ENCODE measurements at regions of chr1 and their contacts with region 1.

Region 1: GRCh38 chr1:160098852-160099561 is 588 bp upstream of the IGSF8 start:
- DNase-seq: peak; percentile 96
- H3K4me3 Mint-ChIP-seq: peak overlapping the region; percentile 81
- H3K27ac Mint-ChIP-seq: no peak overlapping the region
- H3K4me1 Mint-ChIP-seq: peaks cover 36% of the 10 kb centered on the region
- H3K27me3 Mint-ChIP-seq: no peaks in the 10 kb centered on the region
- CTCF ChIP-seq: no peak

Region 2: DNA sequence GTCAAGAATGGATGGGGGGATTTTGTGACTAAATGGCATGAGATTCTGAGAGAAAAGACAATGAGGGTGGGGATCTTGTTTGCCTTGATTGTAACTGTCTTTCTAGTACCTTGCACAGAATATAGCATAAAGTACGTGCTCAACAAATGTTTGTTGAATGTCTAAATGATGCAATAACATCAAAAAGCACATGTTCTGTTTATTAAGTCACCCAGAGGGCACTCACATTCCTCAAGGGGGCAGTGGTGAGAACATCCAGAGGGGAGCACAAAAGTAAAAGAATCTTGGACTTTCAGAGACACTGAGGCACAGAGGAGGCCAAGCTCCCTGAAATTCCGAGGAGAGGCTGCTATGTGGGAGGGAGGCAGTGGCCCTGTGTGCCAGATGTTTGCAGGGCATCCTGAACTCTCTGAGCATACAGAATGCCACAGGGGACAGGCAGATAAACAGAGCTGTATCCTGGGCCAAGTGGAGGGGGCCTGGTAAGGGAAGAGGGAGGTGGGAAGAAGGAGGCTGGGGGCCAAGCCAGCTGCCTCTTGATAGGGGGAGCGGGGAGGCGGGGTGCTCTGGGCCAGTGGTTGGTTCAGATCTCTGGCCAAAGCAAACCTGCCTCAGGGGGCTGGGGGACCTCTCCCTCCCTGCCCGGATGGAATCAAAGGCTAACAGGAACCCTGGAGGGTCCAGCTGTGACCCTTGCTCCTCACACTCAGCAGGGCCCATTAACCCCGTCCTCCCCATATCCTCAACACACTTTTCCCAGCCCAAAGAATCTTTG is 10.1 kb after region 1 on chr1:
- CTCF ChIA-PET with region 1: interaction called, 31 read pairs
- POLR2A ChIA-PET with region 1: interaction called, 4 read pairs
- intact Hi-C with region 1: no loop called
- DNase-seq: peak; percentile 88
- H3K4me3 Mint-ChIP-seq: no peak overlapping the region
- H3K27ac Mint-ChIP-seq: no peak overlapping the region
- H3K4me1 Mint-ChIP-seq: peaks cover 12% of the 10 kb centered on the region
- H3K27me3 Mint-ChIP-seq: no peaks in the 10 kb centered on the region
- CTCF ChIP-seq: peak; percentile 52

Region 3: GRCh38 chr1:160186246-160186645 is 87.2 kb after region 1 on chr1:
- CTCF ChIA-PET with region 1: interaction called, 123 read pairs
- POLR2A ChIA-PET with region 1: no interaction called
- intact Hi-C with region 1: no loop called
- DNase-seq: no peak
- H3K4me3 Mint-ChIP-seq: no peak overlapping the region
- H3K27ac Mint-ChIP-seq: no peak overlapping the region
- H3K4me1 Mint-ChIP-seq: no peaks in the 10 kb centered on the region
- H3K27me3 Mint-ChIP-seq: peaks cover 12% of the 10 kb centered on the region
- CTCF ChIP-seq: no peak

Region 4: GRCh38 chr1:160226623-160227022 is 127.6 kb after region 1 on chr1:
- CTCF ChIA-PET with region 1: interaction called, 243 read pairs
- POLR2A ChIA-PET with region 1: no interaction called
- intact Hi-C with region 1: no loop called
- DNase-seq: no peak
- H3K4me3 Mint-ChIP-seq: no peak overlapping the region
- H3K27ac Mint-ChIP-seq: no peak overlapping the region
- H3K4me1 Mint-ChIP-seq: no peaks in the 10 kb centered on the region
- H3K27me3 Mint-ChIP-seq: no peaks in the 10 kb centered on the region
- CTCF ChIP-seq: no peak

Region 5: DNA sequence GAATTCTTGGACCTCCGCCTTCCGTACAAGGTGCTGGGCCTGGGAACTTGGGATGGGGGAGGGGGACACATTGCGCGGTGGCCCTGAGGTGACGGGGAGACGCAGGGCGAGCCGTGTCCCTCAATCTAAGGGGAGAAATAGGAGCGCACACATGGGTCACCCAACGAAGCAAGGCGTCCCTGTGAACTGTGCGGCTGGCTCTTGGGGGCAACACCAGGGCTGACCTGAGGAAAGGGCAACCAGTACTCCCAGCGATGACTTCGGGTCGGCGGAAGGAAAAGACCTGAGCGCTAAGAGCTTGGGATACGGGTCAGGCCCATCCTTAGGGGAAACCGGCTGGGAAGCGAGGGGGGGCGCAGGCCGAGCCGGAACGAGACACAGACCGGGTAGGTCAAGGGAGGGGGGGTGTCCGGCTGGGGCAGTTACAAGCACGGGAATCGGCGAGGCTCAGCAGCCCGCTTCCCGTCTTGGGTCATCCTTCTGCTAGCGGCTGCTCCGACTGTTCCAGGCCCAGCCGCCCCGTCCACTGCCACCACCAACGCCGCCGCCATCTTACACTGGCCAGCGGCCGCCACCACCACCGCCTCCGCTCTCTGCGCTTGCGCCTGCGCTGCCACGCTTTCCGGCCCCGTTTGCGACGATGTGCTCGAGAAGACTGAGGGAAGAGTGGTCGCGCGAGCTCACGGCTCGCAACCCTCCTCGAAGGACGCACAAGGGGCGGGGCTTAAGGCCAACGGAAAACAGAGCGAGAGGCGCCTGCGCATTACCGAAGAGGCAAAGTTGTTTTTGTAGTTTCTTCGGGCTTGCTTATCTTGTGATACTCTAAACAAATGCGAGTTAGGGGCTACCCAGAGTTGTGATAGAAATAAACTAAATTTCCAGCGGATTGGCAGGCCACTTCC is 163.1 kb after region 1 on chr1 and contains the start of gene DCAF8:
- CTCF ChIA-PET with region 1: interaction called, 64 read pairs
- POLR2A ChIA-PET with region 1: interaction called, 65 read pairs
- intact Hi-C with region 1: no loop called
- DNase-seq: peak; percentile 99
- H3K4me3 Mint-ChIP-seq: peak within 1 kb of the TSS; percentile 97
- H3K27ac Mint-ChIP-seq: peak within 1 kb of the TSS; percentile 100
- H3K4me1 Mint-ChIP-seq: peaks cover 28% of the 10 kb centered on the region
- H3K27me3 Mint-ChIP-seq: peaks cover 8% of the 10 kb centered on the region
- CTCF ChIP-seq: no peak
- total RNA-seq, gene DCAF8: 181 and 208 TPM in 2 replicates

Region 6: GRCh38 chr1:160607011-160607671 is 508.1 kb after region 1 on chr1:
- CTCF ChIA-PET with region 1: no interaction called
- POLR2A ChIA-PET with region 1: no interaction called
- intact Hi-C with region 1: loop called (anchors 5 kb)
- DNase-seq: peak; percentile 85
- H3K4me3 Mint-ChIP-seq: no peak overlapping the region
- H3K27ac Mint-ChIP-seq: no peak overlapping the region
- H3K4me1 Mint-ChIP-seq: no peaks in the 10 kb centered on the region
- H3K27me3 Mint-ChIP-seq: peaks cover 74% of the 10 kb centered on the region
- CTCF ChIP-seq: peak; percentile 96